ENCODE measurements at regions of chr7 and their contacts with region 1.

Region 1: DNA sequence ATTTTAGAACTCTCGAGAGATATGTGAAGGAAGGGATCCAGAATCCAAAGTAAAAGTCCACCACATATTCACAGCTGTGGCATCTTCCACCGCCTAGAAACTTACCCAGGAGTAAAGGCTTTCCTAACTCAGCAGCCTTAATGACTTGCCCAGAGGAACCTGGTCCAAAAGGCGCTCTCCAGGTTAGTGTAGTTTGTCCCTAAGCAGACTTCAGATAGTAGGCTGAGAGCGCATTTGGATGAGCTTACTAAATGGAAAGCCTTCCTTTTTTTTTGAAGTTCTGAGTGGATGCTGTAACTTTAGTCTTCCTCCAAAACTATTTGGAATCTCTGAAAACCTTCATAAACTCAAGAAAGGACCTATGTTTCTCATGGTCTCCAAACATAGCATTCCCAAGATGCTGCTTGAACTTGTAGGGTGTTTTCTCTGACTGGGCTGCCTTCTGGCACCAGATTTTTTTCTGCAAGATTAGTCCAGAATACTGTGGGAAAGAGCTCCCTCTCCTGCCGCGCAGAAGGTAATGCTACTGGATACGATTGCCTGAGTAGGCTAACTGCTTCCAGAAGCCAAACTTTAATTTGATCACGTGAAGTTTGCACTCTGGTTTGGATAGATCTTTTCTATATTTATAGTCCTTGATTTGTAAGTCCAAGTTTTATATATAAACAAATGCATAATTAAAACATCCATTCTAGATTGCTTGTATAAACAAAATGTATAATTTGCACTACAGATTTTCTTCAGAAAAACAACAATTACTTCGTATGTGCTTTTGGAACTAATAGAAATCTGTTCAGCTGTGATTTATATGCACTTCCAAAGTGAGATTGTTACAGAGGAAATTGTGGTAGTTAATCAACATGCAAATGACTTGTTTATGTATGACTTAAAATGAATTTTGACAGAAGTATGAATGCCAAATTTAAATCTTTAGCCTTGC is 19.6 kb upstream of the GPR37 start:
- ATAC-seq: peak; percentile 59 to 90 (median 70)
- H3K4me3 ChIP-seq: no peak overlapping the region
- H3K27ac ChIP-seq: no peak overlapping the region
- H3K4me1 ChIP-seq: no peaks in the 10 kb centered on the region

Region 2: DNA sequence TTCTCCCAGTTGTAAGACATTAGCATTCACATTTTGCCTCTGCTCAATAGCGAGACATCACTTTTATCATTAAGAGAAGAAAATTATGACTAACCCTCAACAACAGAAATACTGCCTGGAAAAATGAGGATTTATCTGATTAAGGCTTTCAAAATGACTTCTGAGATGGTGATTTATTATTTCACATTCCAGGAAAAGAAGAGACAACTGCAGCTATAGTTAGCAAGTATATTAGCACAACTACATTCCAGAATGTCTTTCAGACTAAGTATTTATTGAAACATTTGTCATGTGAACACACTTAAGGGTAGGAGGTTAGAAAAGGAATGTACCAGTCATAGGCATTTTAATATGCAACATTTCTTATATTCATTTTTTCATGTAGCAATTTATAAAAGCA is 1412.8 kb before region 1 on chr7:
- in situ Hi-C with region 1: no loop called
- ATAC-seq: peak in 4 of 8 experiments; percentile 38 to 78 (median 48)
- H3K4me3 ChIP-seq: no peak overlapping the region
- H3K27ac ChIP-seq: no peak overlapping the region
- H3K4me1 ChIP-seq: no peaks in the 10 kb centered on the region

Region 3: DNA sequence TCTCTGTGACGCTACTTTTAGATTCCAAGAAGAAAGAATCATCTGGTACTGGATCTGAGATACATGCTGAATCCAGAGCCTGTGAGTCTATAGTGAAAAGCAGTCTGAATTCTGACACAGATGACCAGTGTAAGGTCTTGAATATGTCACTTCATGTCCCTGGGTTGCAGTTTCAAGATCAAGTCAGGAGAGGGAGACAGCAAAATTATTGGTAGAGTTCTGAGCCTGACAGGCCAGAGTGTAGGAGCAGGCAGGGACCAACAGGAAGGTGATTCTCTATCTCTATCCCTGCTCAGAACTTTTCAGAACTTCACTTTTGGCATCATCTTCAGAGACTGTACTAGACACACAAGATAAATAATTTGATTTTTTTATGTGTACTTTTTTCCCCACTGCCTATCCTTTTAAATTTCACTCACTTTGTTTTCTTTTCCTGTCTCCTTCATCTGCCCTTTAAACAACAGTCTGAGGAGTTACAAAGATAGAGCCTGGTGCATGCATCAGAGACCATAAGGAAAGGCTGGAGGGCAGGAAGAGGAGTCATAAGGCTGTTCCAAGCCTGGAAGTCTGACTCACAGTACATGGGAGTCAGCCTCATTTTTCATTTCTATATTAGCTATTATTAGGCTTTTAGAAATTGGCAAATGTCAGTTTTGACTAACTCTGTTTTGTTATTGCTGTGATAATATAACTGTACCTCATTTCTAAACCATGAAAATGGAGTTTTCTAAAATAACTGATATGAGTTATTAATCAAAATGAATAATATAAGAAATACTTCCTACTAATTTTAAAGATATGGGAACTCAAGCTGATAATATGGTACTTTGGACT is 632.1 kb before region 1 on chr7:
- in situ Hi-C with region 1: loop called in 7 of 9 experiments (anchors 10 to 25 kb)
- ATAC-seq: peak in 6 of 8 experiments; percentile 44 to 87 (median 74)
- H3K4me3 ChIP-seq: no peak overlapping the region
- H3K27ac ChIP-seq: no peak overlapping the region
- H3K4me1 ChIP-seq: no peaks in the 10 kb centered on the region